Activated CD8-positive, alpha-beta T cell treated with anti-CD3 and anti-CD28 coated beads, Interleukin-2, amount 10 ng/mL, durations not matched to agents 7 days and 5 days (primary cell): ENCODE measurements at regions of chr11 and their contacts with region 1.

Region 1: GRCh38 chr11:128630367-128631230 is 43.2 kb upstream of the ETS1 start:
- DNase-seq: peak; percentile 95
- ATAC-seq: peak; percentile 78
- H3K4me3 Mint-ChIP-seq: peak overlapping the region; percentile 72
- H3K27ac Mint-ChIP-seq: peak overlapping the region; percentile 84
- H3K4me1 Mint-ChIP-seq: peaks cover 69% of the 10 kb centered on the region
- H3K27me3 Mint-ChIP-seq: peaks cover under 1% of the 10 kb centered on the region

Region 2: GRCh38 chr11:128187835-128188234 is 442.8 kb before region 1 on chr11:
- CTCF ChIA-PET with region 1: interaction called, 31 read pairs
- POLR2A ChIA-PET with region 1: no interaction called
- DNase-seq: no peak
- ATAC-seq: no peak
- H3K4me3 Mint-ChIP-seq: no peak overlapping the region
- H3K27ac Mint-ChIP-seq: no peak overlapping the region
- H3K4me1 Mint-ChIP-seq: peaks cover 29% of the 10 kb centered on the region
- H3K27me3 Mint-ChIP-seq: no peaks in the 10 kb centered on the region

Region 3: GRCh38 chr11:128323381-128323780 is 307.2 kb before region 1 on chr11:
- CTCF ChIA-PET with region 1: interaction called, 62 read pairs
- POLR2A ChIA-PET with region 1: interaction called, 3 read pairs
- DNase-seq: peak; percentile 73
- ATAC-seq: peak; percentile 25
- H3K4me3 Mint-ChIP-seq: peak overlapping the region; percentile 73
- H3K27ac Mint-ChIP-seq: peak overlapping the region; percentile 95
- H3K4me1 Mint-ChIP-seq: peaks cover 92% of the 10 kb centered on the region
- H3K27me3 Mint-ChIP-seq: no peaks in the 10 kb centered on the region

Region 4: GRCh38 chr11:128482512-128483191 is 147.9 kb before region 1 on chr11:
- CTCF ChIA-PET with region 1: interaction called, 17 read pairs
- POLR2A ChIA-PET with region 1: interaction called, 11 read pairs
- DNase-seq: peak; percentile 65
- ATAC-seq: peak; percentile 70
- H3K4me3 Mint-ChIP-seq: peak overlapping the region; percentile 63
- H3K27ac Mint-ChIP-seq: peak overlapping the region; percentile 88
- H3K4me1 Mint-ChIP-seq: peaks cover 94% of the 10 kb centered on the region
- H3K27me3 Mint-ChIP-seq: no peaks in the 10 kb centered on the region

Region 5: DNA sequence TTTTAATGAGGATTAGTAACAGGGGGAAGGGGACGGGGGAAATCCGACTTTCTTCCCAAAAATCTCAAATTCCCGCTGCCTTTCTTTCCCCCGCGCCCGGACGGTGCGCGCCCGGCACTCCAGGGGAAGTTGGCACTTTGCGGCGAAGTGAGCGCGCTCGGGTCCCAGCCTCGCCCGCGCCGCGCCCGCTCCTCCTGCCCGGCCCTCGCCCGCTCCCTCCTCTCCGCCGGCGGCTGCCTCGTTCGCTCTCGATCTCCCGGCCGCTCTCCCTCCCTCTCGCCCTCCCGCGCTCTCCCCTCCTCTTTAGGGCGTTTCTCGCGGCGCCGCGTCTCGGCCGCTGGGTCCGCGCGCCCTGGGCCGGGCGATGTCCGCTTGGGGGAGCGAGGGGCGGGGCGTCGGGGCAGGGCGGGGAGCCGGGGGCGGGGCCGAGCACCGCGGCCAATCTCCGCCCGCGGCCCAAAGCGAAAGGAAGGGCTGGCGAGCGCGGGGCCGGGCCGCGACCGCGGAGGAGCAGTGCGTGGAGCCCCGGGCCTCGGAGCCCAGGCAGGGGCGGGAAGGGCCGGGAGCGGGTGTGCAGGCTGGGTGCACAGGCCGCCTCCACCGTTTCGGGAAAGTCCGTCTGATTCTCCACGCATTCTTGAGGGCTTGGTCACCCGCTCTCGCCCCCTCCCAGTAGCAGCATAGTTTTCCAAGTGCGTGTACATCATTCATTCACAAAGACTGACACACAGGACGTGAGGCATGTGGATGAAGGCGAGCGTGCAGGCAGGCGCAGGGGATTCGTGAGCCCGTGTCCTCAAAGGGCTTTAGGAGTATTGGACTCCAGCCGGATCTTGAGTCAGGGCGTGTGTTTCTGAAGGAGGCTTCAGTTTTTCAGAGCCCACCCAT is 108.3 kb before region 1 on chr11:
- CTCF ChIA-PET with region 1: interaction called, 247 read pairs
- POLR2A ChIA-PET with region 1: interaction called, 565 read pairs
- DNase-seq: peak; percentile 94
- ATAC-seq: peak; percentile 78
- H3K4me3 Mint-ChIP-seq: peak overlapping the region; percentile 96
- H3K27ac Mint-ChIP-seq: peak overlapping the region; percentile 92
- H3K4me1 Mint-ChIP-seq: peaks cover 44% of the 10 kb centered on the region
- H3K27me3 Mint-ChIP-seq: no peaks in the 10 kb centered on the region

Region 6: GRCh38 chr11:128831174-128832120 is 200.8 kb after region 1 on chr11:
- CTCF ChIA-PET with region 1: interaction called, 97 read pairs
- POLR2A ChIA-PET with region 1: no interaction called
- DNase-seq: peak; percentile 91
- ATAC-seq: peak; percentile 85
- H3K4me3 Mint-ChIP-seq: peak overlapping the region; percentile 58
- H3K27ac Mint-ChIP-seq: peak overlapping the region; percentile 66
- H3K4me1 Mint-ChIP-seq: peaks cover 30% of the 10 kb centered on the region
- H3K27me3 Mint-ChIP-seq: peaks cover 2% of the 10 kb centered on the region

Region 7: DNA sequence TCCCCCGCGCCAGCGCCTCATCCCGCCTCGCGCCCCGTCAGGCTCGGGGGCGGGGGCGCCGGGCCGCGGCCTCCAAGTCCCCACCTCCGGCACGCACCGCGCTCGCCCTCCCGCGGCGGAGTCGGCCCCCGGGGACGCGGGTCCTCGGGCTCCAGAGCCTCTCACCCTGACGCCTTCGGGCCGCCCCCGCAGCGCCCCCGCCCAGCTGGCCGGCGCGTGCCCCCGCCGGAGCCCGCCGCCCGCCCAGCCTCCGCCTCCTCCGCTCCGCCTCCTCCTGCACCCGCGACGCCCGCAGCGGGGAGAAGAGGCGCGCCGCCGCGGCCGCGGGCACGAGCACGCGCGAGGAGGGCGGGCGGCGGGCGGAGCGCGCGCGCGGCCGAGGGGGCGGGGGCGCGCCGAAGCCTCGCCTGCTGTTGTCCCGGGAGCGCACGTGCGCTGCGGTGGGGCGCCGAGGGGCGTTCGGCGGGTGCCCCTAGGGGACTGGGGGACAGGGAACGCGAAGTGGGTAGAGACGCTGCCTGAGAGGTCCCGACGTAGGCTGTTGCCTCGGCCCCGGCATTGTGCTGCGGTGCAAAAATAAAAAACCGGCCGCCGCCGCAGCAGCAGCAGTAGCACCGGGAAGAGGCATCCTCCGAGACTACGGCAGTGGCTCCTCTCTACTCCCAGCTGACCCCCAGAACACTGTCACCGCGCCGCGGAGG is 648.9 kb after region 1 on chr11:
- CTCF ChIA-PET with region 1: no interaction called
- POLR2A ChIA-PET with region 1: no interaction called
- DNase-seq: peak; percentile 71
- ATAC-seq: peak; percentile 87
- H3K4me3 Mint-ChIP-seq: peak overlapping the region; percentile 54
- H3K27ac Mint-ChIP-seq: no peak overlapping the region
- H3K4me1 Mint-ChIP-seq: peaks cover 19% of the 10 kb centered on the region
- H3K27me3 Mint-ChIP-seq: peaks cover 13% of the 10 kb centered on the region